Mammary epithelial cell (primary cell): ENCODE measurements at regions of chr6 and their contacts with region 1.

Region 1: GRCh38 chr6:90940812-90941481 is 354.1 kb upstream of the MAP3K7 start:
- DNase-seq: peak; percentile 67
- H3K4me3 ChIP-seq: no peak overlapping the region
- H3K27ac ChIP-seq: peak overlapping the region; percentile 34
- H3K4me1 ChIP-seq: peaks cover 16% of the 10 kb centered on the region
- H3K27me3 ChIP-seq: no peaks in the 10 kb centered on the region
- CTCF ChIP-seq: peak; percentile 60

Region 2: DNA sequence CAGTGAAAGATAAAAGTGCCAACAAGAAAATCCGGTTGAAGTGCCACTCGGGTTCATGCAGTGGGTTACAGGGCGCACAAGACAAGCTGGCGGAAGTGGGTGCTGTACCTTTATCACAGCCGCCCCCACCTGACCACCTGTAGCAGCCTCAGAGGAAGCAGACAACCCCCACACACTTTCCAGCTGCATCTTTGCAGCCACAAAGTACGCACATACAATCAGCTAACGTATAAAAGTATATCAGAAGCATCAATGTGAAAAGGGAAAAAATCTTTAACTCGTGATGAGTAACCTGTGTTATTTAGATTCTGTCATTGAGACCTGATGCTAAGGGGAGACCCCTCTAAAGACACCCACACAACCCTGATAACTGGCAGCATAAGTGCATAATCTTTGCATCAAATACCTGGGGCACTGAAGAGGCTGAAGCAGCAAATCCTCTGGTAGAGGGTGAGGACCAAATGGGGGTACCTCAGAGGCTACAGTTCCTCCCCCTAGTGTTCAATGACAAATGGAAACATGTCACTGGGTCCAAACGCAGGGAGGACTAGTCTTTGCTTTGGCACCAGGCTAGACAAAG is 666.4 kb before region 1 on chr6:
- CTCF ChIA-PET with region 1: no interaction called
- dilution Hi-C with region 1: no loop called
- in situ Hi-C with region 1: no loop called
- intact Hi-C with region 1: no loop called
- DNase-seq: no peak
- H3K4me3 ChIP-seq: no peak overlapping the region
- H3K27ac ChIP-seq: no peak overlapping the region
- H3K4me1 ChIP-seq: no peaks in the 10 kb centered on the region
- H3K27me3 ChIP-seq: no peaks in the 10 kb centered on the region
- CTCF ChIP-seq: no peak

Region 3: GRCh38 chr6:90631046-90631445 is 309.9 kb before region 1 on chr6:
- CTCF ChIA-PET with region 1: no interaction called
- dilution Hi-C with region 1: no loop called
- in situ Hi-C with region 1: no loop called
- intact Hi-C with region 1: loop called (anchors 5 kb)
- DNase-seq: no peak
- H3K4me3 ChIP-seq: no peak overlapping the region
- H3K27ac ChIP-seq: no peak overlapping the region
- H3K4me1 ChIP-seq: no peaks in the 10 kb centered on the region
- H3K27me3 ChIP-seq: no peaks in the 10 kb centered on the region
- CTCF ChIP-seq: peak in 1 of 2 donors; percentile 26

Region 4: DNA sequence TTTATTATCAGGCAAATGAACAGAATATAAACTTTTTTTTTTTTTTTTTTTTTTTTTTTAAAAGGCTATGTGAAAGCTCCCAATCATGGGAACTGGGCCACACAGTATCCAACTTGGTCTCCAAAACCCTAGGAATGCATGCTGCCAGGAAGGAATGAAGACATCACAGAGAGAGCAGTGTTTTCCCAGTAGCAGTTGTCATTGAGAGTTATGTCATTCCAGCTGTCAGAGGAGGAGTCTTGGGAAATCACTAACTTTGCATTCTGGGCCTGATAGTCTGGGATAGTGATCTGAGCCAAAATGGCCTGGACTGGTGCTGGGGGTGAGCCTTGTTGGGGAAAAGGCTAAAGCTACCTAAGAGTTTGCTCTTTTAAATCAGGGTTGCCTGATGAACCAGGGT is 122.8 kb before region 1 on chr6:
- CTCF ChIA-PET with region 1: no interaction called
- dilution Hi-C with region 1: no loop called
- in situ Hi-C with region 1: no loop called
- intact Hi-C with region 1: no loop called
- DNase-seq: no peak
- H3K4me3 ChIP-seq: no peak overlapping the region
- H3K27ac ChIP-seq: no peak overlapping the region
- H3K4me1 ChIP-seq: no peaks in the 10 kb centered on the region
- H3K27me3 ChIP-seq: no peaks in the 10 kb centered on the region
- CTCF ChIP-seq: no peak

Region 5: GRCh38 chr6:90846824-90847223 is 94.1 kb before region 1 on chr6:
- CTCF ChIA-PET with region 1: no interaction called
- dilution Hi-C with region 1: no loop called
- in situ Hi-C with region 1: no loop called
- intact Hi-C with region 1: loop called (anchors 2 kb)
- DNase-seq: peak; percentile 78
- H3K4me3 ChIP-seq: no peak overlapping the region
- H3K27ac ChIP-seq: peak overlapping the region; percentile 92
- H3K4me1 ChIP-seq: peaks cover 34% of the 10 kb centered on the region
- H3K27me3 ChIP-seq: no peaks in the 10 kb centered on the region
- CTCF ChIP-seq: peak; percentile 17 to 65

Region 6: DNA sequence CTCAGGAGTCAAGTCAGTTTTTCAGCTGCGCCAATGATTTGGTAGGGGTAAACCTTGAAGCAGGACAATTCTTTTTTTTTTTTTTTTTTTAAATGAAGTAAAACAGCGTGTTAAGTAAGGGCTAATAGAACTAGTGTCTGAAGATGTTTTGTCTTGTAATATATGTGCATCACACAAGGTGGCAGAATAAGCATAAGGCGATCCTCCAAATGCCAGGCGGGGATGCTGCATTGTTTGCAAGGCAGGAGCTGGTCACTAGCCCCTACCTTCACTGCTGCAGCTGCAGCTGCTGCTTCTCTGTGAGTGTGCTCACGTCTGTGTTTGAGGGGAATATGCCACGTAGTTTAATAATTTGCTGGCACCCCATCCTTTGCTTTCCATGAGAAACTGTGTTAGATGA is 81.3 kb before region 1 on chr6:
- CTCF ChIA-PET with region 1: no interaction called
- dilution Hi-C with region 1: no loop called
- in situ Hi-C with region 1: no loop called
- intact Hi-C with region 1: loop called (anchors 2 kb)
- DNase-seq: no peak
- H3K4me3 ChIP-seq: no peak overlapping the region
- H3K27ac ChIP-seq: no peak overlapping the region
- H3K4me1 ChIP-seq: peaks cover 14% of the 10 kb centered on the region
- H3K27me3 ChIP-seq: no peaks in the 10 kb centered on the region
- CTCF ChIP-seq: peak; percentile 30 to 49

Region 7: DNA sequence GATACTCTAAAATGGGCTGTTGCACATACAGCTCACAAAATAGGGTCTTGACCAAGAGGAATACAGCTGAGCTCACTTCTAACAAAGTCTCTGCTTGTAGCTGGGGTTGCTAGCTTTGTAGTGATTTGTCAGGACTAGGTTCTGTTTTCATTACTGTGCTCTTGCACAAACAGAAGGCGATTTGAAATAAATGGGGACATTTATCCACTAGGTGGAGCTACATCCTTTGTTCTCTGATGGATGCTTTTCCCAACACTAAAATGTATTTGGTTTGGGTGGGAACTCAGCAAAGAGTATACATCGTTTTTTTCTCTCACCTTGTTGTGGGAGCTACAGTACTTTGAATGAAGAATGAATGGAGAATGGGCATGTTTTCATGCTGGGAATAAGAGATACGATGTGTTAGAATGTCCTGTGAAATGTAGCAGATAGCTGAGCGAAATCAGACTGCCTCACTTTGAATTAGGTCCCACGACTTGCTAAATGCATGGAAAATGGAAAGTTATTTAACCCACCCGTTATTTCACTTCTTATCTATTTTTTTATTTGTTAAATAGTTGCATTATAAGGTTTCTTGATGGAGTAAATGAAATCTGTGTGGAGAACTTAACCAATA is 140.6 kb after region 1 on chr6:
- CTCF ChIA-PET with region 1: interaction called, 3 read pairs
- dilution Hi-C with region 1: no loop called
- in situ Hi-C with region 1: no loop called
- intact Hi-C with region 1: loop called (anchors 5 kb)
- DNase-seq: peak; percentile 40
- H3K4me3 ChIP-seq: no peak overlapping the region
- H3K27ac ChIP-seq: no peak overlapping the region
- H3K4me1 ChIP-seq: no peaks in the 10 kb centered on the region
- H3K27me3 ChIP-seq: no peaks in the 10 kb centered on the region
- CTCF ChIP-seq: peak; percentile 64 to 72

Region 8: GRCh38 chr6:91276315-91276714 is 335.4 kb after region 1 on chr6:
- CTCF ChIA-PET with region 1: no interaction called
- dilution Hi-C with region 1: no loop called
- in situ Hi-C with region 1: no loop called
- intact Hi-C with region 1: loop called (anchors 10 kb)
- DNase-seq: peak; percentile 9
- H3K4me3 ChIP-seq: no peak overlapping the region
- H3K27ac ChIP-seq: no peak overlapping the region
- H3K4me1 ChIP-seq: no peaks in the 10 kb centered on the region
- H3K27me3 ChIP-seq: peaks cover 2% of the 10 kb centered on the region
- CTCF ChIP-seq: peak; percentile 23 to 37

Region 9: GRCh38 chr6:92777146-92777740 is 1836.3 kb after region 1 on chr6:
- CTCF ChIA-PET with region 1: no interaction called
- dilution Hi-C with region 1: no loop called
- in situ Hi-C with region 1: no loop called
- intact Hi-C with region 1: loop called (anchors 10 kb)
- DNase-seq: peak; percentile 1
- H3K4me3 ChIP-seq: no peak overlapping the region
- H3K27ac ChIP-seq: no peak overlapping the region
- H3K4me1 ChIP-seq: peaks cover 5% of the 10 kb centered on the region
- H3K27me3 ChIP-seq: no peaks in the 10 kb centered on the region
- CTCF ChIP-seq: peak; percentile 73 to 74